Activated CD4-positive, alpha-beta memory T cell treated with anti-CD3 and anti-CD28 coated beads, Interleukin-2, amount 10 ng/mL, durations not matched to agents 7 days and 5 days (primary cell): ENCODE measurements at regions of chr14 and their contacts with region 1.

Region 1: GRCh38 chr14:54566410-54567223 is at the start of gene SAMD4A:
- DNase-seq: peak; percentile 55
- H3K4me3 Mint-ChIP-seq: peak within 1 kb of the TSS; percentile 89
- H3K27ac Mint-ChIP-seq: no peak within 1 kb of the TSS
- H3K4me1 Mint-ChIP-seq: peaks cover 19% of the 10 kb centered on the region
- H3K27me3 Mint-ChIP-seq: peaks cover 45% of the 10 kb centered on the region
- total RNA-seq, gene SAMD4A: 1.0 to 1.2 TPM

Region 2: GRCh38 chr14:54535126-54535525 is 31.5 kb before region 1 on chr14:
- CTCF ChIA-PET with region 1: no interaction called
- POLR2A ChIA-PET with region 1: no interaction called
- DNase-seq: no peak
- H3K4me3 Mint-ChIP-seq: no peak overlapping the region
- H3K27ac Mint-ChIP-seq: no peak overlapping the region
- H3K4me1 Mint-ChIP-seq: peaks cover 10% of the 10 kb centered on the region
- H3K27me3 Mint-ChIP-seq: no peaks in the 10 kb centered on the region

Region 3: DNA sequence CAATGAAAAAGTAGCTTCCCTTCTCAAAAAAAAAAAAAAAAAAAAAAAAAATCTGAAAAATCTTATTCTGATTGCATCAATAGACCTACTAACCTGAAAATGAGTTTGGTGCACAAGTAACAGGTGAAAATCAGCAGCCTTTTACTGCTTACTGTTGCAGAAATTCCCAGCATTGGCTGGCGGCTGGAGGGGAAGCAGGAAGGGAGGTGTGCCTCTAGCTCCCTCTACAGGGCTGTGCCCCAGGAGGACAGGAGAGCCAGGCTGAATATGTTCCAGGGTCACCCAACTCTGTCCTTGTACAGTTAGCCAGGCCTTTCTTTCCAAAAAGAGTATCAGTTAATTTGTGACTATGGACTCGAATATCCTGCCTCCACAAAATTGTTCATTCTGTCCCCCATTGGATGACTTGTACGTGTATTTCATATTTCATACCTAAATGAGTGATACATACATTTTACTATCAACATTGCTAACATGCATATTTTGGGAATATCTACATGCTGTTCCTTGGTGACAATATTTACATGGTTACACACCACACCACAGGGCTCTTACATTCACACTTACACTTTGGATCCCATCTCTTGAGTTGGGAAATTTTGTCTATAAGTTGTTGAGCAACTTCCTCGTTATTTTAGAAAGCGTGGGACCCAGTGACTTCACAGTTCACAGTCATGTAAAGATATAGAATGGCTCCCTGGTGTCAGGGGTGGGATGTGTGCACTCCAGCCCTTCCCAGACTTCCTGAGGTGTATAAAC is 125.1 kb after region 1 on chr14:
- CTCF ChIA-PET with region 1: interaction called, 16 read pairs
- POLR2A ChIA-PET with region 1: interaction called, 6 read pairs
- DNase-seq: peak; percentile 57
- H3K4me3 Mint-ChIP-seq: no peak overlapping the region
- H3K27ac Mint-ChIP-seq: no peak overlapping the region
- H3K4me1 Mint-ChIP-seq: peaks cover 10% of the 10 kb centered on the region
- H3K27me3 Mint-ChIP-seq: peaks cover 38% of the 10 kb centered on the region

Region 4: GRCh38 chr14:54805521-54806322 is 239.1 kb after region 1 on chr14:
- CTCF ChIA-PET with region 1: interaction called, 18 read pairs
- POLR2A ChIA-PET with region 1: no interaction called
- DNase-seq: peak; percentile 75
- H3K4me3 Mint-ChIP-seq: no peak overlapping the region
- H3K27ac Mint-ChIP-seq: no peak overlapping the region
- H3K4me1 Mint-ChIP-seq: peaks cover 3% of the 10 kb centered on the region
- H3K27me3 Mint-ChIP-seq: peaks cover 33% of the 10 kb centered on the region

Region 5: GRCh38 chr14:55699131-55700057 is 1132.8 kb after region 1 on chr14:
- CTCF ChIA-PET with region 1: no interaction called
- POLR2A ChIA-PET with region 1: no interaction called
- DNase-seq: no peak
- H3K4me3 Mint-ChIP-seq: no peak overlapping the region
- H3K27ac Mint-ChIP-seq: no peak overlapping the region
- H3K4me1 Mint-ChIP-seq: no peaks in the 10 kb centered on the region
- H3K27me3 Mint-ChIP-seq: no peaks in the 10 kb centered on the region